ENCODE measurements at regions of chr5 and their contacts with region 1.

Region 1: DNA sequence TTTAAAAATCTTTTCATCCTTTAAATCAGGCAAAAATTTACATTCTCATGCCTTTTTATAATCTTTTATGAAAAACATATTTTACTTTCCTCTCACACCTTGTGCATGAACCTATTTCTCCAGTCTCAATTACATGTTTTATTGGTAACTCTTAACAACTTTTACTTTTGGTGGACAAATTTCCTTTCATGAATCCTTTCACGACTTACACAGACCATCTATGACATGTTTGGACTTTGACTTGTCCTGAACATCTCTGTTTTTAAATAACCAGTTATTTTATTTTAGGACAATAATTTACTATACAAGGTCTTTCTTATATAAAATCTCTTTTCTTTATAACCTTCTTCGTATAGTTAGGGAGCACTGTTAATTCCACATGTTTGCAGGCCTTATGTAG is 26.5 kb upstream of the MTMR12 start:
- DNase-seq: no peak
- ATAC-seq: no peak
- H3K4me3 ChIP-seq: no peak overlapping the region
- H3K27ac ChIP-seq: no peak overlapping the region
- H3K4me1 ChIP-seq: no peaks in the 10 kb centered on the region
- H3K27me3 ChIP-seq: no peaks in the 10 kb centered on the region
- CTCF ChIP-seq: no peak

Region 2: GRCh38 chr5:32355686-32356085 is 16.5 kb after region 1 on chr5:
- CTCF ChIA-PET with region 1: no interaction called
- POLR2A ChIA-PET with region 1: interaction called, 13 read pairs
- in situ Hi-C with region 1: no loop called
- intact Hi-C with region 1: no loop called
- DNase-seq: no peak
- ATAC-seq: no peak
- H3K4me3 ChIP-seq: no peak overlapping the region
- H3K27ac ChIP-seq: no peak overlapping the region
- H3K4me1 ChIP-seq: no peaks in the 10 kb centered on the region
- H3K27me3 ChIP-seq: no peaks in the 10 kb centered on the region
- CTCF ChIP-seq: no peak

Measured in Panc1 (cell line).